Posterior vena cava (tissue), 2 donors: ENCODE measurements at regions of chr6 and their contacts with region 1.

Region 1: GRCh38 chr6:167826230-167826895 is 348 bp upstream of the AFDN start:
- DNase-seq: peak; percentile 90

Region 2: GRCh38 chr6:167760979-167761793 is 65.2 kb before region 1 on chr6:
- intact Hi-C with region 1: no loop called
- DNase-seq: peak; percentile 85

Region 3: DNA sequence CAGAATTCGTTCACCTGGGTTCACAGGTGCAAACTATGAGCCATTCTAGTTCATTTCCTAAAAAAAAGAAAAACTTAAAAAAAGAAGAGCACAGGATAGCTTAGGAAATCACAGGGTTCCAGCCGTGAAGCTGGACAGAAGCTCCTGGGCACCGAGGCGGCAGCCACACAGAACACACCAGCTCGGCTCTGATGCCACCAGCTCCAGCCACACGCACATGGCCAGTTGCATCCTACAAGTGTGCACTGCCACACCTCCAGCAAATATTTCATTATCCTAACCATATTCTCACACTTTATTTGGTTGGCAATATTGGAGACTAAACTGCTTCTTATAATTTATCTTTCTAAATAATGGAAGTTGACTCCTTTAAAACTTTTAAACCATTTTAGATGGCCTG is 25.8 kb before region 1 on chr6:
- intact Hi-C with region 1: loop called in 1 of 2 experiments (anchors 1 kb)
- DNase-seq: no peak

Region 4: GRCh38 chr6:168496997-168497331 is 670.6 kb after region 1 on chr6:
- intact Hi-C with region 1: no loop called
- DNase-seq: peak; percentile 76

Region 5: DNA sequence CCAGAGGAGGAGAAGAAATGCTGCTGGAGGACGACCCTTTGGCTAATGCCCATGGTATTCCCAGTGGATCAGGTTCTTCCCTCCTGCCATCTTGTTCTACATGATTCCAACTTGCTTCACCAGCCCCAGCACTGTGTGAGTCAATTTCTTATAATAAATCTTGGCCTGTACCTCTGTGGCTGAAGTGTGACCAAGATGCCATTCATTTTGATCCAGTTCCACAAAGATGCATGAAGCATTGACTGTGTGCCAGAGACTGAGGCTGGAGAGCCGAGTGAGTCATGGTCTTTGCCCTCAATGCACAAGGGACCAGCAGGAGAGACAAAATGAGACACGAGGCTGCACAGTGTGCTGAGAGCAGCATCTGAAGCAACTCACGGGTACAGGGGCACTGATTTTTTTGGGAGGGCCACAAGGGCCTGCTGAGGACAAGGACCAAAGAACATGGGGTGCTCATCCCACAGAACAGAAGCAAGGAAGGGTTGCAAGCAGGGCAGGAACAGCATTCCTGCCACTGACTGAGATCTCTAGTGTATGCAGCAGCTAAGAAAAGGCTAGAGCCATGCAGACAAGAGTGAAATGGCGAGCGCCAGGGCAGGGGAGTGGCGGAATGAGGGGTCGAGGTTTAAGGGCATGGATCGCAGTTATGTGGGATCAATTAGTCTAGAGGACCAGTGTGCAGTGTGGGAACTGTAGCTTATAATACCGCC is 1220.3 kb after region 1 on chr6:
- intact Hi-C with region 1: no loop called
- DNase-seq: no peak